Heart left ventricle (tissue), 16 donors: ENCODE measurements at regions of chr2 and their contacts with region 1.

Region 1: DNA sequence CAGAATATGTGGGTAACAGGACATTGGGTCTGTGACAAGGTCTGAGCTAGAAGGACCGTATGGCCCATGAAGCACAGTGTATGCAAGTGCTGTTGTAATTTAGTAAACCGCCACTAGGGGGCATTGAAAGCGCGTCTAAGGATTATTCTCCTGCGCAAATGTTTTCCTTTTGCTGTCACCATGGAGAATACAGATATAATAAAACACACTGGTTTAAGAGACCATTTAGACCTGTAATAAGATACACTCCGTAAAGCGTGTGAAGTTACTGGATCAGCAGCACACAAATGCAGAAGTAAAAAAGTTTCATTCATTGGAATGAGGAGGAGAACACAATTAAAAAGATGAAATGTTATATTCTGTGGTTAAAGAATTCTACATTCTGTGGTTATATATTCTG is 272.4 kb downstream of the AGAP1 start:
- DNase-seq: peak in 3 of 5 donors; percentile 59 to 69 (median 60)
- ATAC-seq: peak; percentile 76 to 90 (median 86)
- H3K4me3 ChIP-seq: no peak overlapping the region
- H3K27ac ChIP-seq: no peak overlapping the region
- H3K4me1 ChIP-seq: peaks cover 0 to 4% (median 0%) of the 10 kb centered on the region in 12 donors
- H3K27me3 ChIP-seq: no peaks in the 10 kb centered on the region
- CTCF ChIP-seq: peak; percentile 88 to 98 (median 92)
- POLR2A ChIP-seq: no peak

Region 2: DNA sequence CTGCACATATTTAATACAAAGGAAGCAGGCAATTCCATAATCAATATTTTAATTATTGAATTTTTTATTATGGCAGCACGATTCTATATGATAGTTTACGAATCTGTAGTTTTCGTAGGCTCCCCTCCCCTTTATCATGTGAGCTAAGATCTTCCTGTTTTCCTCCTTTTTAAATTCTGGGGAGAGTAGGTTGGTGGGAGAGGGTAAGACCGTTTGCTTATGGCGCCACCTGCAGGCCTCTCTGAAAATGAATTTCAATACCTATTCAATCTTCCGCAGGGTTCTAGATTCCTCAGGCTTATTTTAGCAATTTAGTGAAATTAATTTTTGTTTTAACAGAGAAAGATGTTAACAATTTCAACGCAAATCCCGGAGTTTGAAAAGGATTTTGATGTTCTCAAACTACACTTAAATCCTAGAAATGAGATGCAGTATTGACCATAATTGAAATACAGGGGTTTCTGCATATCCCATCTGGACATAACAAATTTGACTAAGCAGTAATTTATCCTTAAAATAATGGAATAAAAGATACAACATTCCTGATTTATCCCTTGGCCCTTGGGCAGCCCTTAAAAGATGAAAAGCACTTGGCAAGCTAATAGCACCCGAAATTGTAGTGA is 414.7 kb after region 1 on chr2:
- intact Hi-C with region 1: loop called in 7 of 10 experiments (anchors 1 to 5 kb)
- DNase-seq: no peak
- ATAC-seq: peak in 2 of 4 donors; percentile 33 to 44
- H3K4me3 ChIP-seq: no peak overlapping the region
- H3K27ac ChIP-seq: no peak overlapping the region
- H3K4me1 ChIP-seq: peaks cover 0 to 30% (median 15%) of the 10 kb centered on the region in 12 donors
- H3K27me3 ChIP-seq: peaks cover 37 to 62% (median 55%) of the 10 kb centered on the region in 9 donors
- CTCF ChIP-seq: peak; percentile 48 to 80 (median 71)
- POLR2A ChIP-seq: no peak

Region 3: DNA sequence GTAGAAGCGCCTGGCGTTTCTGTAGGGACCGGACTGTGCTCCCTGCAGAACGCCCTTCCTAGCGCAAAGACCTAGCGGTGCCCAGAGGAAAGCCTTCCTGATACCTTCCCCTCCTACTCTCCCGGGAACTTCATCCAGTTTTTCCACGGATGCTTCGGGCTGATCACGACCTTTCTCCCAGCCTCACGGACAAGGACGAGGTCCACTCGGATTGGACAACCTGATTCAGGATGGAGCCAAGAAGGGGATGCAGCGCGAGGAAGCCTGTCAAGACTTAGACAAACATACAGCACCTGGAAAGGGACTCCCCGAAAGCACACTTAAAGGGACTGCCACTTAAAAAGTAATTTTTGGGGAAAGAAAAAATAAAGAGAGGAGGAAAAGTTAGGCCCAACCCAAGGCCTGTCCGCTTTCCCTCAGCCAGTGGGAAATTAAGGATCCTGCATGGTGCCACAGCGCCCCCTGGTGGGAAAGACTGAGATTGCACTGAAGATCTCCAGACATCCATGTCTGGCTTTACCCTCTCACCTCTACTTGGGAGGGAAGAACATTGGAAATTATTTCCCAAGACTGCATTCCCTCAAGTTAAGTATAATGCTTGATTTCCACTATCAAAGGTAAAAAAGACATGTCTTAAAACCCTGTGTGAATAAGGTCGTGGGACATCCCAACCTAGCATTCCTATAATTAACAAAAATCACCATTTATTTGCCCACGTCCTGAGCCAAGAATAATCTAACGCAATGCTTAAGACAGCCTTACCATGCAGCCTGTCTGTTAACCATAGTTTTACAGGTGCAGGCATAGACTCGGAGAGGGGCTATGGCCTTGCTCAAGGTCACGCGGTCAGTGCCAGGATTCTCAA is 1306.0 kb after region 1 on chr2:
- intact Hi-C with region 1: loop called in 4 of 10 experiments (anchors 10 kb)
- DNase-seq: peak; percentile 60 to 82 (median 72)
- ATAC-seq: peak in 3 of 4 donors; percentile 55 to 65 (median 59)
- H3K4me3 ChIP-seq: no peak overlapping the region
- H3K27ac ChIP-seq: peak overlapping the region in 2 of 12 donors; percentile 58 to 64
- H3K4me1 ChIP-seq: peaks cover 0 to 40% (median 28%) of the 10 kb centered on the region in 12 donors
- H3K27me3 ChIP-seq: no peaks in the 10 kb centered on the region
- CTCF ChIP-seq: peak; percentile 92 to 99 (median 98)
- POLR2A ChIP-seq: no peak